K562 (cell line): ENCODE measurements at regions of chr17 and their contacts with region 1.

Region 1: DNA sequence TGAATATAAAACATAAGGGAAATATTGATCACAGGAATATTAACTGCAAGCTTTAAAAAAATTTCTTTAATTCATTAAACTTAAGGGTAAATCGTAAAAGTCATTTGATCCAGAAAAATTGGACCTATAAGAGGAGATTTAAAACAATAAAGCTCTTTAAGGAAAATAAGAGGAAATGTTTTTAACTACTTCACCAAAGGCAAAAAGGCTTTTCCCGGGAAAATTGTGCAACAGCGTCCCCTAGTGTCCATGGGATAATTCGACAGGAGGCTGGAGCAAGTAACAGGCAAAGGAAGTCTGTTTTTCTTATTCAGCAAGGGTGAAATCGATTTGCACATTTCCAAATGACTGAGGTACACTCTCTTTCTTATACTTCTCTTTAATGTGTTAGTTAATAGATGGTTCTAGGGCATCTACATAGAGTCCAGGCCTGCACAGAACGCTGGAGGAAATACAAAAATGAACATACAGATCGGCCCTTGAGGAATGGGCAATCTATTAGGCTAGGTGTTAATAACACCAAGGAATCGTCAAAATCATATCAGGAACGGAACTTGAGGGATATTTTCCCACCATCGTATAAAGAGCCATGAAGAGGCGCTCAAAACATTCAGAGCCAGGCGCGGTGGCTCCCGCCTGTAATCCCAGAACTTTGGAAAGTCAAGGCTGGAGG is 61.4 kb downstream of the ZNF18 start:
- DNase-seq: peak; percentile 30 to 74 (median 50)
- ATAC-seq: peak; percentile 59
- H3K4me3 ChIP-seq: no peak overlapping the region
- H3K27ac ChIP-seq: no peak overlapping the region
- H3K4me1 ChIP-seq: no peaks in the 10 kb centered on the region; a peak in 1 of 5 replicates
- H3K27me3 ChIP-seq: peaks cover 0 to 27% of the 10 kb centered on the region in 2 experiments; a peak in 2 of 5 replicates
- CTCF ChIP-seq: peak; percentile 73 to 91 (median 83)
- EP300 ChIP-seq: no peak
- POLR2A ChIP-seq: no peak
- RAD21 ChIP-seq: peak; percentile 72 to 89

Region 2: GRCh38 chr17:11871773-11872172 is 64.1 kb before region 1 on chr17:
- CTCF ChIA-PET with region 1: no interaction called
- POLR2A ChIA-PET with region 1: no interaction called
- in situ Hi-C with region 1: no loop called
- intact Hi-C with region 1: loop called (anchors 10 kb)
- DNase-seq: peak; percentile 16 to 27 (median 18)
- ATAC-seq: peak; percentile 87
- H3K4me3 ChIP-seq: no peak overlapping the region
- H3K27ac ChIP-seq: no peak overlapping the region
- H3K4me1 ChIP-seq: no peaks in the 10 kb centered on the region; a peak in 2 of 5 replicates
- H3K27me3 ChIP-seq: peaks cover 2 to 28% of the 10 kb centered on the region in 2 experiments; a peak in 4 of 5 replicates
- CTCF ChIP-seq: peak; percentile 15 to 53 (median 40); a peak in 5 of 6 replicates
- EP300 ChIP-seq: no peak
- POLR2A ChIP-seq: no peak
- RAD21 ChIP-seq: peak in 1 of 2 experiments; percentile 38; a peak in 2 of 4 replicates